ENCODE measurements at regions of chr5 and their contacts with region 1.

Region 1: DNA sequence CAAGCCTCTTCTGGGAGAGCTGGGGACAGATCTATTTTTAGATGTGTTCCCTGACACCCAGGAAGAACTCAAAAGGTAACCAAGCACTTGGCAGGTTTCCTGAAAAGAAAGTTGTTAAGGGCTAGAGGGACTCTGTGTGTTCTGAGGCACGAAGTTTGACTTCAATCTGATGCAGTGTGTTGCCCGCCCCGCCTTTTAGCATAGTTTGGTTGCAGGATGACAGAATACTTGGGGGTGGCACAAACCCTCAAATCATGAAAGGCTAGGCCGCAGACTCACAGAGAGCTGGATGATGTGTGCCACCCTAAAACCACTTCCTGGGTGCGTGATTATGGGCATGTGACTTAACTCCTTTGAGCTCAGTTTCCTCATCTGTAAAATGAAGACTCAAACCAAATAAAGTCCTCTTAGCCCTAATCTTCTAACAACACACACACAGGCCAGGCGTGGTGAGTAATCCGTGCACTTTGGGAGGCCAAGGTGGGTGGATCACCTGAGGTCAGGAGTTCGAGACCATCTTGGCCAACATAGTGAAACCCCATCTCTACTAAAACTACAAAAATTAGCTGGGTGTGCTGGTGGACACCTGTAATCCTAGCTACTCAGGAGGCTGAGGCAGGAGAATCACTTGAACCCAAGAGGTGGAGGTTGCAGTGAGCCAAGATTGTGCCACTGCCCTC is 12.8 kb upstream of the NDFIP1 start:
- DNase-seq: no peak
- ATAC-seq: no peak
- H3K4me3 ChIP-seq: no peak overlapping the region
- H3K27ac ChIP-seq: no peak overlapping the region
- H3K4me1 ChIP-seq: no peaks in the 10 kb centered on the region
- H3K27me3 ChIP-seq: no peaks in the 10 kb centered on the region; the same call in 1 of the 2 replicates
- CTCF ChIP-seq: no peak

Region 2: GRCh38 chr5:141633871-141634561 is 461.8 kb before region 1 on chr5:
- CTCF ChIA-PET with region 1: no interaction called
- POLR2A ChIA-PET with region 1: no interaction called
- in situ Hi-C with region 1: no loop called
- intact Hi-C with region 1: no loop called
- DNase-seq: no peak
- ATAC-seq: no peak
- H3K4me3 ChIP-seq: no peak overlapping the region
- H3K27ac ChIP-seq: no peak overlapping the region
- H3K4me1 ChIP-seq: peaks cover 8% of the 10 kb centered on the region; the same call in 1 of the 2 replicates
- H3K27me3 ChIP-seq: no peaks in the 10 kb centered on the region
- CTCF ChIP-seq: no peak

Region 3: DNA sequence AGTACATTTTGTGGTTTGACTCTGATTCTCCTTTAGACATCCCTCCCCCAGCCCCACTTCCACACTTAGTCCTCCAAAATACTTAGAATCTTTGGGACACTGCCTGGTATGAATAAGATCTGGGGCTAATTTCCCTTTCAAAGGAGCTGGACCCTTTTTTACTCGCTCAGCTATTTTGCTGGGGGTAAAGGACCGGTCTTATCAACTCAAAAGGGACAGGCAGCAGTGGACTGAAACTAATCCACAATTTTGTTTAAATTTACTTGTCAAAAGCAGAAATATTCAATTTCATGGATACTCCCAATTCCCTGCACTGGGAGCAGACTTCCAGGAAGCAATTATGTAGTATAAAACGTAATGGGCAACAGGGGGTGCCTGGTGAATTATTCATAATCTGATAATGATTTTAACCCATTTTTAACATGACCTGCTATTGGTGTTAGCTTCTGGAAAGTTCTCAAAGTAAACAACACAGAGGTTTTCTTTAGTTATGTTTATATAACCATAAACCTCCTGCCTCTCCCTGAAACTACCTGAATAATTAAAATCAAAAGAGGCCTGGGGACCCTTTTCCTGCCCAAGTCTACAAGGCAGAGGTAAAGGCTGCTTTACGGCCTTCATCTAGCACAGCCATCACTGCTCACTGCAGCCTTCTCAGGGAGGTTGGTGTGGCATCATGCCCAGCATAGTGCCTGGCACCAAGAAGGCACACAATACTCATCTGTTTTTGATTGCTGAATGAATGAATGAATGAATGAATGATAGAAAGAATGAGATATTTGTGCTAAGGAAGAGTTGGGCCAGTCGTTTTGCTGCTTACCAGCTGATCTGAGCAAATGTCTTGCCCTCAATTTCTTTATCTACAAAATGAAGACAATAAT is 38.7 kb before region 1 on chr5:
- CTCF ChIA-PET with region 1: no interaction called
- POLR2A ChIA-PET with region 1: interaction called, 13 read pairs
- in situ Hi-C with region 1: no loop called
- intact Hi-C with region 1: no loop called
- DNase-seq: no peak
- ATAC-seq: no peak
- H3K4me3 ChIP-seq: no peak overlapping the region
- H3K27ac ChIP-seq: no peak overlapping the region
- H3K4me1 ChIP-seq: no peaks in the 10 kb centered on the region
- H3K27me3 ChIP-seq: no peaks in the 10 kb centered on the region
- CTCF ChIP-seq: no peak

Region 4: GRCh38 chr5:142128675-142129208 is 33.0 kb after region 1 on chr5:
- CTCF ChIA-PET with region 1: interaction called, 15 read pairs
- POLR2A ChIA-PET with region 1: no interaction called
- in situ Hi-C with region 1: no loop called
- intact Hi-C with region 1: no loop called
- DNase-seq: no peak
- ATAC-seq: no peak
- H3K4me3 ChIP-seq: no peak overlapping the region
- H3K27ac ChIP-seq: no peak overlapping the region
- H3K4me1 ChIP-seq: no peaks in the 10 kb centered on the region
- H3K27me3 ChIP-seq: no peaks in the 10 kb centered on the region
- CTCF ChIP-seq: no peak

Measured in Panc1 (cell line).